ENCODE measurements at regions of chr1 and their contacts with region 1.

Region 1: GRCh38 chr1:245045087-245045881 is 109.5 kb upstream of the KIF26B start:
- DNase-seq: no peak
- ATAC-seq: no peak
- H3K4me3 ChIP-seq: no peak overlapping the region
- H3K4me3 Mint-ChIP-seq: no peak overlapping the region
- H3K27ac ChIP-seq: no peak overlapping the region
- H3K27ac Mint-ChIP-seq: no peak overlapping the region
- H3K4me1 ChIP-seq: no peaks in the 10 kb centered on the region
- H3K4me1 Mint-ChIP-seq: no peaks in the 10 kb centered on the region
- H3K27me3 ChIP-seq: no peaks in the 10 kb centered on the region
- H3K27me3 Mint-ChIP-seq: no peaks in the 10 kb centered on the region
- CTCF ChIP-seq: no peak

Region 2: DNA sequence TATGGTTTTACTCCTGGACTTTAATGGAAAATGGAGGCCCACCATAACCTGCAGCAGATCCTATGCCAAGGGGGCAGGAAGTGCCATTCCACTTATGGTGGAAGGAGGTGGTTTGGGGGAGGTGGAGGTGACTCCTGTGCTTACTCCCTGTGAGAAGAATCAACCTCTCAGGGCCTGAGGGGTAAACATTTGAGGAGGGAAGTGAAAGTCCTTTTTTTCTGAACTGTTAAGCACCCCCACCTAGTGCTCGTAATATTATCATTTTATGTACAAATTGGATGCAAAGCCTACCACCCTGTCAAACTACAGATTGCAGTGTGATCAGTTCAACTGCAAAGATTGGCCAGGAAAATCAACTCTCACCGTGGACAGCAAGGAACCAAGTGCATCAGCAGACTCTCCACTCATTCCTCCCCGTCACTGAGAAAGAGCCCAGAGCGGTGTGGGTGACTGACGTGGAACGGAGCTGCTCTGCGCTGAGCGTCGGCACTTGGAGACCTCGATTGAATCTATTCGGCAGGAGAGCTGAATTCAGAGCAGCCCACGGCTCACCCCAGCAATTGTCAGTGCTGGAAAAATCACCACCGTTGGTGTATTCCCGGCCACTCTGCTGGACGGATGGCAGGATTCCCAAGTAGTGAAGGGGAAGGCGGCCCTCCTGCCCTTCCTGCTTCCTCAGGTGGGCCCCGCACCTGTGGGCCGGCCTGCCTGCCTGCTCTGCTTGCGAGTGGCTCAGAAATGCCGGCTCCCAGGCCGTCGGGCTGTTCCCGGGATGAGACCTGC is 256.6 kb before region 1 on chr1:
- CTCF ChIA-PET with region 1: interaction called, 12 read pairs
- POLR2A ChIA-PET with region 1: no interaction called
- intact Hi-C with region 1: no loop called
- DNase-seq: peak; percentile 37
- ATAC-seq: peak; percentile 36
- H3K4me3 ChIP-seq: no peak overlapping the region
- H3K4me3 Mint-ChIP-seq: no peak overlapping the region
- H3K27ac ChIP-seq: no peak overlapping the region
- H3K27ac Mint-ChIP-seq: no peak overlapping the region
- H3K4me1 ChIP-seq: peaks cover 5 to 10% of the 10 kb centered on the region in 2 donors
- H3K4me1 Mint-ChIP-seq: peaks cover 10% of the 10 kb centered on the region
- H3K27me3 ChIP-seq: no peaks in the 10 kb centered on the region
- H3K27me3 Mint-ChIP-seq: no peaks in the 10 kb centered on the region
- CTCF ChIP-seq: no peak

Region 3: GRCh38 chr1:244815600-244816099 is 229.6 kb before region 1 on chr1:
- CTCF ChIA-PET with region 1: interaction called, 13 read pairs
- POLR2A ChIA-PET with region 1: no interaction called
- intact Hi-C with region 1: no loop called
- DNase-seq: peak; percentile 76
- ATAC-seq: peak; percentile 69
- H3K4me3 ChIP-seq: peak overlapping the region; percentile 47 to 68 (median 55)
- H3K4me3 Mint-ChIP-seq: peak overlapping the region; percentile 82
- H3K27ac ChIP-seq: peak overlapping the region; percentile 10 to 16
- H3K27ac Mint-ChIP-seq: peak overlapping the region; percentile 73
- H3K4me1 ChIP-seq: peaks cover 20 to 28% of the 10 kb centered on the region in 2 donors
- H3K4me1 Mint-ChIP-seq: peaks cover 27% of the 10 kb centered on the region
- H3K27me3 ChIP-seq: no peaks in the 10 kb centered on the region
- H3K27me3 Mint-ChIP-seq: no peaks in the 10 kb centered on the region
- CTCF ChIP-seq: no peak

Region 4: DNA sequence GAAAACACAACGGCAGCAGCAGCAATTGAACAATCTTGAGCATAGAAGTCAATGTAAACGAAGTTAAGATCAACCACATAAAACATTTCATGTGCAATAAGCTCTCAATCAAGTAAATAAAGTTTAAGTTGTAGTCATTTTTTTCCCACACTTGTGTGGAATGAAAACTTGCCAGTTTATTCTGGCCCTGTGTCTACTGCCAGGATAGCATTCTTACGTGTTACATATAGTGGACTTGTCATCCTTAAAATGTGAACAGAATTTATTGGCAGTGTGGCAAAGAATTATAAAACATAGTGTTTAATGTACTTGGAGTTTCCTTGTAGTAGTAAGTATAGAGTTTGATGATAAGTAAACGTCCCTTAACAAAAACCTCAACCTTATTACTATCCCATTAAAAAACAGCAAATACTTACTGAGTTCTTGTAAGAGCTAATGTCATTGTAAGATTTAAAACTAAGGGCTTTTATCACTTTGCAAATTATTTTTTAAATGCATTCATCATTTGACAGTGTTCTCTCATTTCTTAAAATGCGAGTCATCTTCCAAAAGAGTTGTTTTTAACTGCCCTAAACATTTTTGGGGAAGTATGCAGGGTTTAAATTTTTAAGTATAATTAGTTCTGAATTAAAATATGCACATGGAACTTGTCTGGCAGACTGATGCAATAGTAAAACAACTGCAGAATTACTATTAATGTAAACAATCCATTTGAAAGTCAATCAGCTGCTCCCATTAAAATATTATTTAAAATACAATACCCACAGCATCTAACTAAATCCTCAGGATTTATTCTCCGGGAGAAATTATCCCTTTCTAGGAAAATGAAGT is 201.9 kb before region 1 on chr1:
- CTCF ChIA-PET with region 1: interaction called, 38 read pairs
- POLR2A ChIA-PET with region 1: no interaction called
- intact Hi-C with region 1: no loop called
- DNase-seq: no peak
- ATAC-seq: no peak
- H3K4me3 ChIP-seq: no peak overlapping the region
- H3K4me3 Mint-ChIP-seq: no peak overlapping the region
- H3K27ac ChIP-seq: no peak overlapping the region
- H3K27ac Mint-ChIP-seq: no peak overlapping the region
- H3K4me1 ChIP-seq: peaks cover 0 to 3% of the 10 kb centered on the region in 2 donors
- H3K4me1 Mint-ChIP-seq: peaks cover 26% of the 10 kb centered on the region
- H3K27me3 ChIP-seq: no peaks in the 10 kb centered on the region
- H3K27me3 Mint-ChIP-seq: no peaks in the 10 kb centered on the region
- CTCF ChIP-seq: no peak

Region 5: GRCh38 chr1:244945109-244945671 is 100.1 kb before region 1 on chr1:
- CTCF ChIA-PET with region 1: interaction called, 14 read pairs
- POLR2A ChIA-PET with region 1: no interaction called
- intact Hi-C with region 1: no loop called
- DNase-seq: peak; percentile 63
- ATAC-seq: peak; percentile 19
- H3K4me3 ChIP-seq: peak overlapping the region in 2 of 5 experiments; percentile 13 to 35
- H3K4me3 Mint-ChIP-seq: peak overlapping the region; percentile 71
- H3K27ac ChIP-seq: peak overlapping the region; percentile 61 to 63
- H3K27ac Mint-ChIP-seq: peak overlapping the region; percentile 87
- H3K4me1 ChIP-seq: peaks cover 18 to 31% of the 10 kb centered on the region in 2 donors
- H3K4me1 Mint-ChIP-seq: peaks cover 25% of the 10 kb centered on the region
- H3K27me3 ChIP-seq: no peaks in the 10 kb centered on the region
- H3K27me3 Mint-ChIP-seq: no peaks in the 10 kb centered on the region
- CTCF ChIP-seq: no peak